ENCODE measurements at regions of chr20 and their contacts with region 1.

Region 1: GRCh38 chr20:37758332-37758731 is 64.5 kb downstream of the CTNNBL1 start:
- DNase-seq: peak; percentile 70
- ATAC-seq: peak; percentile 97
- H3K4me3 Mint-ChIP-seq: no peak overlapping the region
- H3K27ac Mint-ChIP-seq: no peak overlapping the region
- H3K4me1 Mint-ChIP-seq: no peaks in the 10 kb centered on the region
- H3K27me3 Mint-ChIP-seq: no peaks in the 10 kb centered on the region
- CTCF ChIP-seq: peak; percentile 32; the same call in 1 of the 2 replicates

Region 2: DNA sequence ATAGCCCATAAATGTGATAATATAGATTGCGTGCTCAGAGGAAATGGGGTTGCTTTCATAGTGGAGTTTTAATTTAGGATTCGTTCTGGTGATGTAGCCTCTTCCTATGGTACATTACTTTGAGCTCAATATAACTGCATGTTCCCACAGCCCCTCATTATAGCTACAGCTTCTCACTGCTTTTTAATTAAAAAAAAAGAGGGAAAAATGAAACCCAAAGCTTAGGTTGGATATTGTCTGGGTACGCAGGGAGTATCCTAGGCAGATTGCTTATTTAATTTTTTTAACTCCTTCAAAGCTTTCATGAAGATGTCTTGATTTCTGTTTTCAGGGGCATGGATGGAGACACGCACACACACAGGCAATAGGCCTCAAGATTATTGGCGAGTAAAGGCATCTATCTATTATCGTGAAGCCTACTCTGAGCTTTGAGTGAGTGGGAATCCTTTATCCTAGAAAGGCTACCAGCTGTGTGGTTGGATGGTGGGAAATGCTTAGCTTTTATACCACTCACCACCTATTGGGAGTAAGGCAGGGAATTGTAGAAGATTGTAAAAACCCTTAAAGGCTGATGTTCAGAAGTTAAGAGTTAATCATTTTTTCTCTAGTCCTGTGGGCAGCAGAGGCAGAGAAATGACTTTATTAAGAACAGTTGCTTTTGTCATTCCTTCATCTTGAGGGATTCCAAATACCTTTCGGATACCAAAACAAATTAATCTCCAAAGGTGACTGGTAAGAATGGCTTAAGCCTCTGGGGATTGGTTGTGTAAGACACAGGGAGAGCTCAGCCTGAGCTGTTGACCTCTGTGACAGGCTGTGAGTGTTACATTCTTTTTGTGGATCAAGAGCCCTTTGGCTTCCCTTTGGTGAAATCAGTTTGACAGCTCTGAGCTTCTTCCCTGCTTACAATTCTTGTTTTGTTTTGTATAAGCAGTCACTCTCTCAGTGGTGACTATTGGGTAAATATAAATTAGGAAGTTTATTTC is 31.1 kb before region 1 on chr20:
- CTCF ChIA-PET with region 1: interaction called, 10 read pairs
- POLR2A ChIA-PET with region 1: no interaction called
- DNase-seq: no peak
- ATAC-seq: peak; percentile 83
- H3K4me3 Mint-ChIP-seq: no peak overlapping the region
- H3K27ac Mint-ChIP-seq: peak overlapping the region; percentile 81
- H3K4me1 Mint-ChIP-seq: peaks cover 37% of the 10 kb centered on the region
- H3K27me3 Mint-ChIP-seq: no peaks in the 10 kb centered on the region
- CTCF ChIP-seq: no peak